ENCODE measurements at regions of chr4 and their contacts with region 1.

Region 1: DNA sequence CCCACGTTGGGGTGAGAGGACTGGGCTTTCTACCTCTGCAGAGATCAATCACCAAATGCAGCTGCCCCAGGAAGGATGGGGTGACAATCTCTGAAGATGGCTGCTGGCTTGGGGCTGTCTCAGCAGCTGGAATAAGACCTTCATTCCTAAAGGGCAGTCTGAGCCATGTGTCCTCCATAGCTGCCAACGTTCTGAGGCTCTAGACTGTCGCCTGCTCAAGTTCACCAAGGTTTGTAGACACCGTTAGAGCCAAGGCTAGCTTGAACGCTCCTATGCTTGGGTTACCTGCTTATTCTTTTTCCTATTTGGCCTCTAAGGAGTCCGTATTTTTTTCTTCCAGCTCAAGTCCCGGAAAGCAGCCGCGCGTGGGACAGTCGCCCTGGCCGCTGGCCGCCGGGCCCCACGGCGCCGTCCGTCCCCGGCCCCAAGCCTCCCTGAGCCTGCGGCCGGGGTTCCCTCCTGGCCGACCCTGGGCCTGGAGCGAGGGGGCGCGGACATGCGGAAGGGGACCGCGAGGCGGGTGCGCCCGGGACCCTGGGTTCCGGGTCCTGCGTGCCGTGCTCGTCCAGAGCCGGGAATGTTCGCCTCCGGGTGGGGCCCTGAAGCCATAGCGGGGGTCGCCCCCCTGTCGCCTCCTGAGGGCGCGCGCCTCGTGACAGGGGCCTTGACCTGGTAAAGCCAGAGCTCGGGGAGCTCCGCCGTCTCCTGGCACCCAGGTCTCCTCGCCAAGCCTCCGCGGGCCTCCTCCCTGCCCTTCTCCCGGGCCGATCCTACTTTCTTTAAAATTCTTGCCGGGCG is 23.3 kb downstream of the MRFAP1 start:
- H3K4me3 ChIP-seq: no peak overlapping the region
- H3K27ac ChIP-seq: no peak overlapping the region
- H3K4me1 ChIP-seq: no peaks in the 10 kb centered on the region
- CTCF ChIP-seq: no peak

Region 2: DNA sequence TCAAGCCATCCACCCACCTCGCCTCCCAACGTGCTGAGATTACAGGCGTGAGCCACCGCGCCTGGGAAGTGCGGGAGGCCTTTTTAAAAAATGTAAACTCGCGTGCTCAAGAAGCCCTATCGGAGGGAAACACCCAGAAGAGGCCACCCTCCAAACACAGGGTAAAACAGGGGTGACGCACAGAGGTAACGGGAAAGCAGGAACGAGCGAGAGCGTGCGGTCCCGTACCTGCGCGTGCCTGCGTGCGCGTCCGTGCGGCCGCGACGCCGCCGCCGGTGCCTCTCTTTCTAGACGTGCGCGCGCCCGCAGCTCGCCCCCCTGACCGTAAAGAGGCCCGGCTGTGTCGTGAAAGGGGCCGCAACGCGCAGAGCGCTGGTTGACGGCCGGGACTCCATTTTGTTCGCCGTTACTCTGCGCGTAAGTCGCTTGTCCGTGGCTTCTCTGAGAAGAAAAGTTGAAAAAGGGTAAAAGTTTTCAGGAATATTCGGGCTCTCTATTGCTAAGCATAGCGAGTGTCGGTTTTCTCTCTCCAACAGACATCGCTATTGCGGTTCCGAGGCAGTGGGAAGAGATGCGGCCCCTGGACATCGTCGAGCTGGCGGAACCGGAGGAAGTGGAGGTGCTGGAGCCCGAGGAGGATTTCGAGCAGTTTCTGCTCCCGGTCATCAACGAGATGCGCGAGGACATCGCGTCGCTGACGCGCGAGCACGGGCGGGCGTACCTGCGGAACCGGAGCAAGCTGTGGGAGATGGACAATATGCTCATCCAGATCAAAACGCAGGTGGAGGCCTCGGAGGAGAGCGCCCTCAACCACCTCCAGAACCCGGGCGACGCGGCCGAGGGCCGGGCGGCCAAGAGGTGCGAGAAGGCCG is 23.3 kb before region 1 on chr4 and contains the start of gene MRFAP1:
- CTCF ChIA-PET with region 1: no interaction called
- POLR2A ChIA-PET with region 1: interaction called, 10 read pairs
- H3K4me3 ChIP-seq: peak within 1 kb of the TSS; percentile 79
- H3K27ac ChIP-seq: peak within 1 kb of the TSS; percentile 89
- H3K4me1 ChIP-seq: no peaks in the 10 kb centered on the region
- CTCF ChIP-seq: no peak

Region 3: GRCh38 chr4:6673660-6674499 is 10.1 kb after region 1 on chr4:
- CTCF ChIA-PET with region 1: interaction called, 7 read pairs
- POLR2A ChIA-PET with region 1: interaction called, 17 read pairs
- H3K4me3 ChIP-seq: peak overlapping the region; percentile 52
- H3K27ac ChIP-seq: peak overlapping the region; percentile 75
- H3K4me1 ChIP-seq: no peaks in the 10 kb centered on the region
- CTCF ChIP-seq: no peak